PC-9 (cell line): ENCODE measurements at regions of chr5 and their contacts with region 1.

Region 1: DNA sequence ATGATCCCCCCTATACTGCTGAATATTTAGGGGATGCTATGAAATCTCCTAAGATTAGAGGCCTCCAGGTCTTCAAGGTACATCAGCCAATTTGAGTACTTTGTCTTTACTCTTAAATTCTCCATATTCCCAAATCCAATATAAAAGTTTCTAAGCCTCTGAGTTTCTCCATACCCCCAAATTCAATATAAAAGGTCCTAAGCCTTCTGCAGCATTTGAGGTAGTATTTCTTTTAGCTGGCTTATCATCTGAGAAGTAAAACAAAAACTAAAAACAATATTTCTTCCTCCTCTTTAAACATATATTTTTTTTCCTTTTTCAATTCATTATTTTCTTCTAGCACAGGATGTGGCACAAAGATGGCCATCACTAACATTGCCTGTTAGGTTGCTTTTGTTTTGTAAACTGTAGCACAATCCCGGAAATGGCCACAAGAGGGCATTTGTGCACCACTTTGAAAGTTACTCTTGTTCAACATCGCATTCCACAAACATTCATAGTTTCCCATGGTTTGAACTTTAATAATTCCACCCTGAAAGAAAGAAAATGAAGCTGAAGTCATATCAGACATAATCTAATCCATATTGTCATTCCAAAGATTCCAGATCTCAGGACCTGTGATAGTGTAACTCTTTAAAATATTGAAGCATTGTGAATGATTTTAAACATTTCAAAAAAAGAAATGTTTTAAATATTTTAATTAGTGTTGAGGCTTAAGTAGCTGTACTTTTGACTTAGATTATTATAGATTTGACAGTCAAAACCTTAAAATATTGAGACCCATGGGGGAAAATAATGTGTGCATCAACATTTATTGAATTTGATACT is 21.0 kb upstream of the SCGB3A2 start:
- DNase-seq: peak; percentile 39 to 51
- H3K4me3 ChIP-seq: no peak overlapping the region
- H3K27ac ChIP-seq: no peak overlapping the region
- H3K4me1 ChIP-seq: no peaks in the 10 kb centered on the region
- H3K27me3 ChIP-seq: no peaks in the 10 kb centered on the region
- CTCF ChIP-seq: peak; percentile 89

Region 2: DNA sequence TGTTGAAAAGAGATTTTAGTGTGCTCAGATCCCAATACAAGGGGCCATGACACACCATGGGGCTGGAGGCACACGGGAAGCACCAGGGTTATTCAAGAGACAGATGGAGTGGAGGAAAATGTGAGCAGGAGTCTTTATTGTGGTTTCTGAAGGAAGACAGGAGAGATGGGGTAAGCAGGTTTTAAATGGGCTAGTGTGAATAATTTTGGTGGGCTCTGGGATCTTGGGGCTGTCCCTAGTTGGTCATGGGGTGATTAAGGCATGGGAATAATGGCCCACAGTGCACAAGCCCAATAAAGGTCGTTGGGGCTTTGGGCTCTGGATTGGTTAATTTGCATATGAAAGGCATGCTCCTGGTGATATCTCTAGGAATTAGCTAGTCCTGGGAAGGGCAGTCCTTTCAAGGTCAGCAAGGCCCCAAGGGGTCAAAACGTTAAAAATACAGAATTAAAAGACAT is 17.4 kb after region 1 on chr5:
- CTCF ChIA-PET with region 1: no interaction called
- POLR2A ChIA-PET with region 1: no interaction called
- intact Hi-C with region 1: no loop called
- DNase-seq: no peak
- H3K4me3 ChIP-seq: no peak overlapping the region
- H3K27ac ChIP-seq: no peak overlapping the region
- H3K4me1 ChIP-seq: no peaks in the 10 kb centered on the region
- H3K27me3 ChIP-seq: no peaks in the 10 kb centered on the region
- CTCF ChIP-seq: no peak

Region 3: DNA sequence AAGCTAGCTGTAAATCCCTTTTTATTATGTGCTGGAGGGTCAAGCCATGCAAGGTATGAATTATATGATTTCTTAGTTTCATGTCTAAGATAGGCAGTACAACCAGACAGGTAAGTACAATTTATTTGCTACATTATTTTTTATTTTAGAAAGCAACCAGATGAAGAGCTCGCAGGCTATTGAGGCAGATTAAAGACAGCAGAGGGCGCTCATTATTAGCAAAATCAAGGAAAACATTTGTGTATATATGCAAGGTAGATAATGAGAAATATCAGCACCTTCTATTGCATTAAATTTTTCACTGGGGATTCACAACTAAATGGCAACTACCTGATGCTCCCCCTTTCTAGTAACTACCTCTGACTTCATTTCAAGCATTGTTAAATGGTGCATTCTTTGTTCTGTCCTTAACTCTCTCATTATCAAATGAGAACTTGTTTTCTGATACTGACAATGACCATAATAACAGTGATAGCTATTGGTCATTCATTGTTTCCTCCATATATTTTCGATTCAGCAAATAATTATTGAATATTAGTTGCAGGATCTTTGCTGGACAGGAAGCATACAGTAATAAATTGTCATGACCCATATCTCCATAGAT is 29.6 kb after region 1 on chr5:
- CTCF ChIA-PET with region 1: interaction called, 5 read pairs
- POLR2A ChIA-PET with region 1: no interaction called
- intact Hi-C with region 1: loop called (anchors 1 kb)
- DNase-seq: peak; percentile 27 to 40
- H3K4me3 ChIP-seq: no peak overlapping the region
- H3K27ac ChIP-seq: no peak overlapping the region
- H3K4me1 ChIP-seq: peaks cover 26% of the 10 kb centered on the region
- H3K27me3 ChIP-seq: no peaks in the 10 kb centered on the region
- CTCF ChIP-seq: peak; percentile 82

Region 4: DNA sequence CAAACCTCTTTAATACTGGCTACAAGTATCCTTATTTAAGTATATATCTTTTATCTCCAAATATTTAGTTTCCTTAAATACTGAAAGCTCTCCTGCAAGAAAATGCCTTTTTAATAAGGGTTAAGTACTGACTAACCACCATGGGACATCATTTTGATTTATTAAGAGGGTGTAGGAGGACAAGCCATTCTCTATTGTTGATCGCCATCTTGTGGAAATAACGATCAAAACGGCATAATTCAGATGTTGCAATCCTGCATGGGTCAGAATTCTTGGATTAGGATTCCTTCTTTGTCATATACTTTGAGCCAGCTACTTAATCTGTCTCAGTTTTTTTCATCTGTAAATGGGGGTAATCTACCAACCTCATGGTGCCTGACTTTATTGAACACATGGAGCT is 77.5 kb after region 1 on chr5:
- CTCF ChIA-PET with region 1: interaction called, 3 read pairs
- POLR2A ChIA-PET with region 1: no interaction called
- intact Hi-C with region 1: loop called (anchors 1 kb)
- DNase-seq: peak; percentile 26 to 54
- H3K4me3 ChIP-seq: no peak overlapping the region
- H3K27ac ChIP-seq: no peak overlapping the region
- H3K4me1 ChIP-seq: no peaks in the 10 kb centered on the region
- H3K27me3 ChIP-seq: no peaks in the 10 kb centered on the region
- CTCF ChIP-seq: peak; percentile 81

Region 5: GRCh38 chr5:148120317-148120716 is 262.8 kb after region 1 on chr5:
- CTCF ChIA-PET with region 1: no interaction called
- POLR2A ChIA-PET with region 1: no interaction called
- intact Hi-C with region 1: loop called (anchors 5 kb)
- DNase-seq: no peak
- H3K4me3 ChIP-seq: no peak overlapping the region
- H3K27ac ChIP-seq: no peak overlapping the region
- H3K4me1 ChIP-seq: no peaks in the 10 kb centered on the region
- H3K27me3 ChIP-seq: no peaks in the 10 kb centered on the region
- CTCF ChIP-seq: no peak

Region 6: DNA sequence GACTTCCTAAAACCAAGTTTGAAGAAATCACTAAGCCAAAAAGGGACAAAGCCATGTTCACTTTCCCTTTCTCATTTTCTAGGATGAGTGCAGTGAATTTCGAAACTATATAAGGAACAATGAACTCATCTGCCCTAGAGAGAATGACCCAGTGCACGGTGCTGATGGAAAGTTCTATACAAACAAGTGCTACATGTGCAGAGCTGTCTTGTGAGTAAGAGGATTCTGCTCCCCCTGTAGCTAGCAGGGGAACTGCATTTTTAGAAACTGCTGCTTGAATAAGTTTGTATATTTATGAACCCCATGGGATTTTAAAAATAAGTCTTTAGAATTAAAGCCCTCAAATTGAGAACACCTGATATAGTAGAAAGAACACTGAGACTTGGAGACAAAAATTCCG is 268.1 kb after region 1 on chr5:
- CTCF ChIA-PET with region 1: no interaction called
- POLR2A ChIA-PET with region 1: no interaction called
- intact Hi-C with region 1: loop called (anchors 5 kb)
- DNase-seq: no peak
- H3K4me3 ChIP-seq: no peak overlapping the region
- H3K27ac ChIP-seq: no peak overlapping the region
- H3K4me1 ChIP-seq: no peaks in the 10 kb centered on the region
- H3K27me3 ChIP-seq: no peaks in the 10 kb centered on the region
- CTCF ChIP-seq: no peak; the same call in 1 of the 2 replicates

Region 7: GRCh38 chr5:148179234-148179824 is 321.8 kb after region 1 on chr5:
- CTCF ChIA-PET with region 1: no interaction called
- POLR2A ChIA-PET with region 1: no interaction called
- intact Hi-C with region 1: loop called (anchors 5 kb)
- DNase-seq: peak; percentile 6 to 63
- H3K4me3 ChIP-seq: no peak overlapping the region
- H3K27ac ChIP-seq: no peak overlapping the region
- H3K4me1 ChIP-seq: no peaks in the 10 kb centered on the region
- H3K27me3 ChIP-seq: no peaks in the 10 kb centered on the region
- CTCF ChIP-seq: peak; percentile 84

Region 8: GRCh38 chr5:148374692-148375360 is 517.3 kb after region 1 on chr5:
- CTCF ChIA-PET with region 1: no interaction called
- POLR2A ChIA-PET with region 1: no interaction called
- intact Hi-C with region 1: loop called (anchors 1 kb)
- DNase-seq: peak; percentile 36 to 48
- H3K4me3 ChIP-seq: no peak overlapping the region
- H3K27ac ChIP-seq: no peak overlapping the region
- H3K4me1 ChIP-seq: no peaks in the 10 kb centered on the region
- H3K27me3 ChIP-seq: no peaks in the 10 kb centered on the region
- CTCF ChIP-seq: peak; percentile 84

Region 9: GRCh38 chr5:148645527-148645926 is 788.0 kb after region 1 on chr5:
- CTCF ChIA-PET with region 1: no interaction called
- POLR2A ChIA-PET with region 1: no interaction called
- intact Hi-C with region 1: no loop called
- DNase-seq: no peak
- H3K4me3 ChIP-seq: no peak overlapping the region
- H3K27ac ChIP-seq: no peak overlapping the region
- H3K4me1 ChIP-seq: no peaks in the 10 kb centered on the region
- H3K27me3 ChIP-seq: no peaks in the 10 kb centered on the region
- CTCF ChIP-seq: no peak